ENCODE measurements at regions of chr17 and their contacts with region 1.

Region 1: DNA sequence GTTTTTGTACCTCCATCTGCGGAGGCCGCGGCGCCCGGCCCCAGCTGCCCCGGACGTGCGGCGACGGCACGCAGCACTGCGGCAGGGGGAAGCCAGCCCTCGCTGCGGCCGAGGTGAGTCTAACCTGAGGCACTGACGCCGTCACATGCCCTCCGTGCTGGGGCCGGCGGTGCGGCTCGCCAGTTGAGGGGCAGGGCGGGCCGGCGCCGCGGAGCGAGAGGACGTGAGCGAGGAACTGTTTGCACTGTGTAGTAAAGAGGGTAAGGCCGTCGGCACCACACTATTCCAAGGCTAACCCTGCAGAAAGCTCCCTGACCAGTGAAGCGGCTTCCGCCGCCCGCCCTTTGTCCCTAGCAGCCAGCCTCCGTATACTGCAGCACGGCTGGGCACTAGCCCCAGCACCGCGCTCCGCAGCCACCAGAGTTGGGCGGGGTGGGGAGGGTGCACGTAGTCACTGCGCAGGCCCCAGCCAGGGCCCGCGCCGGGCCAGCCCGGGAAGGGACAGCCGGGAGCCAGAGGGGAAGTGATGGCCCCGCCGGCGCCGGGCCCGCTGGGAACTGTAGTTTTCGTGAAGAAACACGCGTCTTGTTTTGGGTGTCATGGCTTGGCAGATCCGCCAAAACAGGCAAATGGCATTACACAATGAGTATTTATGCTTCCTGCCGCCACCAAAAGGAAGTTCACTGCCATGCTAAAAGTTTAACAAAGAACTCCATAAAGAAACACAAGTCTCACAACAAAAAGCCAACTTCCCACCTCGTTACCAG is 580 bp upstream of the KANSL1 start:
- DNase-seq: peak; percentile 89 to 99 (median 97)

Region 2: GRCh38 chr17:46002311-46002972 is 191.4 kb before region 1 on chr17:
- intact Hi-C with region 1: loop called (anchors 5 kb)
- DNase-seq: peak; percentile 43 to 91 (median 76)

Region 3: GRCh38 chr17:46044286-46044928 is 149.4 kb before region 1 on chr17:
- intact Hi-C with region 1: loop called (anchors 5 kb)
- DNase-seq: peak in 38 of 42 donors; percentile 29 to 92 (median 77)

Region 4: GRCh38 chr17:46147296-46147695 is 46.5 kb before region 1 on chr17:
- intact Hi-C with region 1: no loop called
- DNase-seq: no peak

Measured in head of caudate nucleus (tissue), 42 donors.